ENCODE measurements at regions of chr2 and their contacts with region 1.

Region 1: DNA sequence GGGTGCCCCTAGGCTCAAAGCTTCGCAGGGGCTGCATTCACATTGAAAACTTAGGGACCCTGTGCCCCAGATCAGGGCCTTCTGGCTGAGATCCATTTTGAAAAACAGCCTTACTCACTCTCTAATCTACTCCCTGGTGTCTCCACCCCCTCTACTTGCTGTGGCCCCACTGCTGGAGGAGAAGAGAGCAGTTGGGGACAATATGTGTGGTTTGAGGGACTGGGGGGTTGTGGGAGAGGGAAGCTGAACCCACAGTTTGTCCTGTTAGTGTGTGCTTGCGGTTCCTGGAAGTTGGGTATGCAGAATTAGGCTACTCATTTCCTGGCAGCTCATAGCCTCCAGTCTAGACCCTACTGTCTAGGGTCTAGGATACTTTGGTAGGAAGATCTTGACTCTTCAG is 211.4 kb downstream of the PRKCE start:
- DNase-seq: peak; percentile 42 to 89 (median 84)
- H3K4me3 ChIP-seq: peak overlapping the region in 4 of 7 experiments; percentile 6 to 40 (median 22)
- H3K27ac ChIP-seq: peak overlapping the region in 1 of 2 experiments; percentile 96
- H3K4me1 ChIP-seq: peaks cover 15 to 82% (median 57%) of the 10 kb centered on the region in 4 experiments
- H3K27me3 ChIP-seq: no peaks in the 10 kb centered on the region

Region 2: GRCh38 chr2:45882707-45883602 is 20.1 kb after region 1 on chr2:
- CTCF ChIA-PET with region 1: interaction called, 13 read pairs
- POLR2A ChIA-PET with region 1: no interaction called
- DNase-seq: no peak
- H3K4me3 ChIP-seq: no peak overlapping the region
- H3K27ac ChIP-seq: no peak overlapping the region
- H3K4me1 ChIP-seq: peaks cover 0 to 38% (median 27%) of the 10 kb centered on the region in 4 experiments
- H3K27me3 ChIP-seq: no peaks in the 10 kb centered on the region

Region 3: DNA sequence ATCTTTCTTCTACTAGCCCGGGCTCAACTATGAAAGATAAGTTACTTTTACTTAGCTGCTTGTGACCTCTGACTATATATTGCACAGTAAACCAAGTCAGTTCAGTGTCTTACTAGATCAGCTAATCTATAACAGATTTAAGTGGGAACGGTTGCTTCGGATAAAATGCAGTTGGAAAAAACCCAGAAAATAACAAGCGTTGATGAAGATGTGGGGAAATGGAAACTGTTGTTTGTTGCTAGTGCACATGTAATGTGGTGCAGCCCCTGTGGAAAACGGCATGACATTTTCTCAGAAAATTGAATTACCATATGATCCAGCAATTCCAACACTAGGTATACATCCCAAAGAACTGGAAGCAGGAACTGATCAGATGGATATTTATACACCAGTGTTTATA is 37.1 kb after region 1 on chr2:
- CTCF ChIA-PET with region 1: no interaction called
- POLR2A ChIA-PET with region 1: no interaction called
- DNase-seq: no peak
- H3K4me3 ChIP-seq: no peak overlapping the region
- H3K27ac ChIP-seq: no peak overlapping the region
- H3K4me1 ChIP-seq: peaks cover 0 to 22% (median 7%) of the 10 kb centered on the region in 4 experiments
- H3K27me3 ChIP-seq: no peaks in the 10 kb centered on the region

Measured in common myeloid progenitor, CD34-positive (primary cell).